ENCODE measurements at regions of chr3 and their contacts with region 1.

Region 1: GRCh38 chr3:112013058-112013783 is 14.5 kb downstream of the TAGLN3 start:
- DNase-seq: peak; percentile 57
- ATAC-seq: peak; percentile 90
- H3K4me3 Mint-ChIP-seq: no peak overlapping the region
- H3K27ac Mint-ChIP-seq: no peak overlapping the region
- H3K4me1 Mint-ChIP-seq: peaks cover 9% of the 10 kb centered on the region; the same call in 1 of the 2 replicates
- H3K27me3 Mint-ChIP-seq: no peaks in the 10 kb centered on the region
- CTCF ChIP-seq: 0 out of 2 replicates have a peak, but pooled peaks have one; percentile 41

Region 2: GRCh38 chr3:111717601-111718000 is 295.6 kb before region 1 on chr3:
- CTCF ChIA-PET with region 1: interaction called, 49 read pairs
- POLR2A ChIA-PET with region 1: no interaction called
- DNase-seq: peak; percentile 71
- ATAC-seq: peak; percentile 96
- H3K4me3 Mint-ChIP-seq: no peak overlapping the region
- H3K27ac Mint-ChIP-seq: no peak overlapping the region
- H3K4me1 Mint-ChIP-seq: peaks cover 8% of the 10 kb centered on the region
- H3K27me3 Mint-ChIP-seq: no peaks in the 10 kb centered on the region
- CTCF ChIP-seq: peak; percentile 93

Region 3: DNA sequence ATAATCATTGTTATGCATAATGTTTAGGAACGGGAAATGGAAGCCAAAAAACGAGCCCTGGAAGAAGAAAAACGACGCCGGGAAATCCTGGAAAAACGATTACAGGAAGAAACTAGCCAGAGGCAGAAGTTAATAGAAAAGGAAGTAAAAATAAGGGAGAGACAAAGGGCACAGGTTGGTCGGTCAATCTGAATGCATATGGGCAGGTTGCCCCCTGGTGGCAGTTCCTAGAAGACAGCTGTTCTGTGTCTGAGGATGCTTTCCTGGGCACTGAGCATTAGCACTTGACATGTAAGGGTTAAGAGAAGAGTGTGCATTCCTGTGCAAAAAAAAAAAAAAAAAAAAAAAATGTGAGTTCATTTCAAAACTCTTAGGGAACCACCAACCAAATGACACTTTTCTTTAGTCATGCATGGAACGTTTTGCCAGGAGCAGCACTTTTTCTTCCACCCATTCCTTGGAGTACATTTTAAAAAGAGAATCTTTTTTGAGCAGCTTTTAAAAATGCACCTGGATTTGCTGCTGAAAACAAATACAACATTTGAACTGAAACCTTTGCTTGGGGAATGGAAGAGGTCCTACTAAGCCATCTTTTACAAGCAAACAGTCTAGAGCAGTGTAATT is 45.5 kb before region 1 on chr3:
- CTCF ChIA-PET with region 1: interaction called, 19 read pairs
- POLR2A ChIA-PET with region 1: no interaction called
- DNase-seq: peak; percentile 87
- ATAC-seq: peak; percentile 90
- H3K4me3 Mint-ChIP-seq: no peak overlapping the region
- H3K27ac Mint-ChIP-seq: no peak overlapping the region
- H3K4me1 Mint-ChIP-seq: peaks cover 9% of the 10 kb centered on the region
- H3K27me3 Mint-ChIP-seq: no peaks in the 10 kb centered on the region
- CTCF ChIP-seq: peak; percentile 87

Region 4: DNA sequence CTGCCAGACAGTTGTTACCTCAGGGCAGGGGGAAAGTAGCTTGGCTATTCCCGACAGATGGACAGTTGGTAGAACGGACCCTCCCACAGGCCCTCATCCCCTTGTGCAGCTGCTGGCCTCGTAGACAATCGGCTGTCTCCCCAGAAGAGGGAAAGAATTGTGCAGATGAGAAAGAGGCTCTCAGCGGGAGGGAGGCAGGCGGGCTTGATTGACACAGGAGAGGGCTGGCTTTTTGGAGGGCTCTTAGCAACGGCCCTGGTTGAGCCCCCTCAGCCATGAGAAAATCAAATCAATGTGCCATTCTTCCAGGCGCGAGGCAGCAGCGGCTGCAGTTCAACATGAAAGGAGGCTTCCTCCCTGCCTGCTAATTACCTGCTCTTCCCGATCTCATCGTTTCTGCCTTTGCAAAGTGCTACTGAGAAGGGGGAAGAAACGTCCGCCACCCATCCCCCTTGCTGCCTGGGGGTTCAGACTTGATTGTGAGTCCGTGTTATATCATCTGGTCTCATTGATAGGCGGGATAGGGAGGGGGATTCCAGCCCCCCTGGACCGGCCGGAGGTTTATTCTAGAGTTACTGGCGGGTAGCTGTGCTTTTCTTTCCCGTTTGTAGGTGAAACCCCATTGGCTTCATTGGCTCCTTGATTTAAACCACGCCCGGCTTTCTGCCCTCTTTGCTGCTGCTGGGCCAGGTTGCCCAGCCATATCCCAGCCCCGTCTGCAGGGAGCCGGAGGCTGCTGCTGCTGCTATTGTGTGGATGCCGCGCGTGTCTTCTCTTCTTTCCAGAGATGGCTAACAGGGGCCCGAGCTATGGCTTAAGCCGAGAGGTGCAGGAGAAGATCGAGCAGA is 14.4 kb before region 1 on chr3 and contains the start of gene TAGLN3:
- CTCF ChIA-PET with region 1: interaction called, 150 read pairs
- POLR2A ChIA-PET with region 1: interaction called, 7 read pairs
- DNase-seq: peak; percentile 54
- ATAC-seq: peak; percentile 86
- H3K4me3 Mint-ChIP-seq: peak within 1 kb of the TSS; percentile 90
- H3K27ac Mint-ChIP-seq: no peak within 1 kb of the TSS
- H3K4me1 Mint-ChIP-seq: peaks cover 22% of the 10 kb centered on the region
- H3K27me3 Mint-ChIP-seq: peaks cover 64% of the 10 kb centered on the region
- CTCF ChIP-seq: no peak
- total RNA-seq, gene TAGLN3: 2.8 to 3.3 TPM (median 2.8 TPM) in 3 replicates

Region 5: DNA sequence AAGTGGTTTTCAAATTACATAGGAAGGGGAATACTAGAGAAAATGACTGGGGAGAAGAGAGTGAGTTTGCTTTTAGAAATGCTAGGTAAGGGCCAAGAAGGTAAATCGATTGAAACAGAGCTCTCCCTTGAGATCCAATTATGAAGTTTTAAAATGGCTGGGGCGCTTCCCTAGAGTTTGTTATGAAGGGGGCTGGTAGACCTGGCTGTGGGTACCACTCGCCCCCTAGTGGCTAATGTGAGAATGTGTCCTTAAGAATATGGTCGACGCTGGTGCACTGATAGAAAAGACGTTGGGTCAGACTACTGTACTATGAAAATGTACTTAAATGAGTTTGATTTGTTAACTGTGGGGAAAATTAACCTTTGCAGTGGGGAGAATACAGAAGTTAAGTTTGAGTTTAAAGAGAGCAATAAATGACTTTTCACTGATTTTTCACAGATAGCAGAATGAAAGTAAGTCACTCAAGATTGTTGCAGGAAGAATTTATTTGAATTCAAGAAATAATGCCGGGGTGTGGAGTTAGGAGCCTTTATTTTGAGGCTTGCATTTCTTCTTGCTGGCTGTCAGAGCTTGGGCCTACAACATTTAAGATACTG is 30.5 kb after region 1 on chr3:
- CTCF ChIA-PET with region 1: interaction called, 38 read pairs
- POLR2A ChIA-PET with region 1: no interaction called
- DNase-seq: peak; percentile 34
- ATAC-seq: peak; percentile 86
- H3K4me3 Mint-ChIP-seq: no peak overlapping the region
- H3K27ac Mint-ChIP-seq: no peak overlapping the region
- H3K4me1 Mint-ChIP-seq: peaks cover 31% of the 10 kb centered on the region
- H3K27me3 Mint-ChIP-seq: no peaks in the 10 kb centered on the region
- CTCF ChIP-seq: peak; percentile 89